ENCODE measurements at regions of chr1 and their contacts with region 1.

Region 1: DNA sequence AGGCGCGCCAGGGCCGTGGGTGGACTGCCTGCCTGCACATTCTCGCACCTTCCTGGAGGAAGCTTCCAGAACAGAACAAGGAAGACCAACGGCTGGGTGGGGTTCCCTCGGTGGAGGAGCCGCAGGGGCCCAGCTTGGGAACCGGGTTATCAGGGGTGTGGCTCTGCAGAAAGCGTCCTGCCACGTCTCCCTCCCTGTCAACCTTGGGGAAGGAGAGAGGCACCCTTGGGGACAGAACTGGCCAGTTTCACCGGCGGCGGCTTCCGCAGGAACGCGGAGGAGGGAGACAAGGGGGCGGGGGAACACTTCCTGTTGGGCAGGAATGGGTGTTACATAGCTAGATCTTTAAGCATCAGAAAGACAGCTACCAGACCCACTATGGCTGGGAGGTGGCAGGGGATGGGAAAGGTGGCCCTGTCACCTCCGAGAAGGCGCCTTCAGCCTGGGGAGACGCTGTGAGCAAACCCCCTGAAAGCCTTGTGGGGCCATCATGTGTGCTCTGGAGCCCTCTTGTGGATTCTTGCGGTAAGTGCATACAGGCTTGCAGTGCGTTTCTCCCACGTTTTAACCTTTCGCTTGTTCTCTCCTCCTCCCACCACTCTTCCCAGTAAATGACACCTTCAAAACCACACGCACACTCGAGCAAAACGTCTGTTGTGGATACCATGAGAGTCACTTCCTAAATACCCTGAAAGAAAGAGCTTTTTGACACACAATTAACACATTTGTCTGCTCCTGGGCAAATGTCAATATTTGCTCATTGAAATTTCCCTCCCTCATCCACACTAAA is 3.8 kb upstream of the PLEKHA6 start:
- DNase-seq: peak; percentile 77 to 84 (median 83)
- ATAC-seq: peak; percentile 60 to 86 (median 80)
- H3K4me3 ChIP-seq: peak overlapping the region in 11 of 12 donors; percentile 15 to 60 (median 47)
- H3K27ac ChIP-seq: peak overlapping the region in 11 of 12 donors; percentile 42 to 76 (median 74)
- H3K4me1 ChIP-seq: peaks cover 5 to 35% (median 22%) of the 10 kb centered on the region in 12 donors
- H3K27me3 ChIP-seq: peaks cover 0 to 4% (median 0%) of the 10 kb centered on the region in 9 donors
- CTCF ChIP-seq: peak; percentile 92 to 99 (median 98)
- POLR2A ChIP-seq: no peak

Region 2: DNA sequence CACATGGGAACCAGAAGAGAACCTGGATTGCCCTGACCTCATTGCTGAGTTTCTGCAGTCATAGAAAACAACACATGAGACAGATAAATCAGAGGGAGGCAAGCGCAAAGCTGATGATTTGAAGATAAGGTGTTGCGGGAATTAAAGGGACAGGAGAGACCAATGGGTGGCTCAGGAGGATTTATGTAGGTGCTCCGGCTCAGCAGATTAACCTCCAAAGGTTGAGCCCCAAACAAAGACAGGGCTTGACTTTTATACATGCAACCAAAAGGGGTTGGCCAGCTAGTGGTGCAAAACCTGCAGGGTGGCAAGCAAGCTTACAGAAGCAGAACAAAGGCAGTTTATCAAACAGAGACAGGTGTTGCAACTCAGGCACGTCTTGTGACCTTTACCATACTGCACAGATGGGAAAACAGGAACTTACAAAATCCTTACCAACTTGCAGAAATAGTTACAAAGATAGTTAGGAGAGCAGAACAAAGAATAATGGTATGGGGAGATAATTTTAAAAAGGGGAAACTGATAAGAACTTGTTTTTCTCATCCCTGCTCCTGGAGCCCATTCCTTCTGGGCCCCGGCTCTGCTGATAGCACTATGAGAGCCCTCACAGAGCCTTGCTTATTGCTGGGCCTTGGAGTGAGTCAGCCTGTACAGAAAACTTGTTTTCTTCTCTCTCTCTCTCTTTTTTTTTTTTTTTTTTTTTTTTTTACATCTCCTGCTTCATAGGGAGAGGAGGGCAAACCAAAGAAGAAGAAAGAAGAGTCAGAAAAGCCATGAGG is 408.6 kb before region 1 on chr1:
- intact Hi-C with region 1: no loop called
- DNase-seq: no peak
- ATAC-seq: no peak
- H3K4me3 ChIP-seq: no peak overlapping the region
- H3K27ac ChIP-seq: no peak overlapping the region
- H3K4me1 ChIP-seq: no peaks in the 10 kb centered on the region
- H3K27me3 ChIP-seq: no peaks in the 10 kb centered on the region
- CTCF ChIP-seq: no peak
- POLR2A ChIP-seq: no peak

Region 3: DNA sequence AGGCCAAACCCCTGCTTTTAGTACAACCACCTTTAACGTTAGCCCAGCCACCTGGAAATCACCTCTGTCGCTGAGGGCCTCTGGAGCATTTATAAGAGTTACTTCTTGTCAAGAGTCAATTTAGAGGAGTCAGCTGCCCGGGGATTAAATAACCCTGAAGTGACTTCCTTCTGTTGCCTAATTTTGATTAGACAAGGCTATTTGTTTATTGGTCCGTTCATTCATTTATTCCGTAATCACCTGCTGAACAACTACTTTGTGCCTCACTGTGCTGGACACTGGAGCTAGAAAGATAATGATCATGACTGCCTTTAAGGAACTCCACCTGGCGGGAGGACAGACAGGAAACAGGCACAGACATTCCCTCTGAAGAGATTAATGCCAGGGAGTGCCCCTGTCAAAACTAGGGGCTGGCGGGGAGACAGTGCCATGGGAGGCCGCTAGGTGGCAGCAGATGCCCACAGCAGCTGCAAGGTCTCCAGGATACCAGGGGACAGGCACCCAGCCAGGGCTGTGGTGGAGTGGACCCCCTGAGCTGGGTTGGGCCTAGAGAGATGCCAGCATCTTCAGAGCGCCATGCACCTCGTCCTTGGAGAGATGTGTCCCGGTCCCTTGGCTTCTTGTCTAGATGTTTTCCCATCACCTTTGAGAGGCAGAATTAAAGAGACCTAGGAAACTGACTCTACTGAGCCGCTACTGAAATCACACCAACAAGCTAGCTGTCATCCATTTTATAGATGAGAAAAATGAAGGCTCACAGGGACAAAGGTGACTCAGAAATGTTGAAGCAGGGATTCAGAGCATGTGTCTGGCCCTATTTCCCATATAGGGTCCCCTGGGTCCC is 201.1 kb before region 1 on chr1:
- intact Hi-C with region 1: loop called (anchors 1 to 2 kb)
- DNase-seq: peak; percentile 70 to 89 (median 74)
- ATAC-seq: peak; percentile 67 to 90 (median 86)
- H3K4me3 ChIP-seq: no peak overlapping the region
- H3K27ac ChIP-seq: no peak overlapping the region
- H3K4me1 ChIP-seq: no peaks in the 10 kb centered on the region
- H3K27me3 ChIP-seq: peaks cover 0 to 8% (median 0%) of the 10 kb centered on the region in 9 donors
- CTCF ChIP-seq: peak; percentile 92 to 100 (median 99)
- POLR2A ChIP-seq: no peak

Region 4: GRCh38 chr1:204213668-204214662 is 149.6 kb before region 1 on chr1 and contains the start of gene GOLT1A:
- intact Hi-C with region 1: loop called (anchors 1 to 5 kb)
- DNase-seq: peak; percentile 49 to 74 (median 56)
- ATAC-seq: peak; percentile 49 to 85 (median 76)
- H3K4me3 ChIP-seq: peak within 1 kb of the TSS in 9 of 12 donors; percentile 9 to 40 (median 23)
- H3K27ac ChIP-seq: no peak within 1 kb of the TSS
- H3K4me1 ChIP-seq: peaks cover 0 to 11% (median 8%) of the 10 kb centered on the region in 12 donors
- H3K27me3 ChIP-seq: peaks cover 0 to 8% (median 0%) of the 10 kb centered on the region in 9 donors
- CTCF ChIP-seq: peak; percentile 47 to 84 (median 72)
- POLR2A ChIP-seq: no peak
- total RNA-seq, gene GOLT1A: 0.29 TPM in 1 of 9 donors, not detected in the others

Region 5: GRCh38 chr1:204307334-204307883 is 56.1 kb before region 1 on chr1:
- intact Hi-C with region 1: loop called in 1 of 10 experiments (anchors 5 kb)
- DNase-seq: peak in 4 of 5 donors; percentile 35 to 67 (median 40)
- ATAC-seq: peak; percentile 76 to 92 (median 88)
- H3K4me3 ChIP-seq: peak overlapping the region in 9 of 12 donors; percentile 3 to 52 (median 32)
- H3K27ac ChIP-seq: peak overlapping the region in 5 of 12 donors; percentile 1 to 52 (median 40)
- H3K4me1 ChIP-seq: peaks cover 0 to 19% (median 2%) of the 10 kb centered on the region in 12 donors
- H3K27me3 ChIP-seq: no peaks in the 10 kb centered on the region
- CTCF ChIP-seq: peak in 8 of 12 donors; percentile 4 to 53 (median 34)
- POLR2A ChIP-seq: no peak

Measured in heart left ventricle (tissue), 16 donors.